ENCODE measurements at regions of chr13 and their contacts with region 1.

Region 1: GRCh38 chr13:20495082-20496023 is 30.3 kb downstream of the CRYL1 start:
- DNase-seq: peak; percentile 42
- H3K4me3 Mint-ChIP-seq: no peak overlapping the region
- H3K27ac Mint-ChIP-seq: no peak overlapping the region
- H3K4me1 Mint-ChIP-seq: no peaks in the 10 kb centered on the region
- H3K27me3 Mint-ChIP-seq: peaks cover 3% of the 10 kb centered on the region

Region 2: DNA sequence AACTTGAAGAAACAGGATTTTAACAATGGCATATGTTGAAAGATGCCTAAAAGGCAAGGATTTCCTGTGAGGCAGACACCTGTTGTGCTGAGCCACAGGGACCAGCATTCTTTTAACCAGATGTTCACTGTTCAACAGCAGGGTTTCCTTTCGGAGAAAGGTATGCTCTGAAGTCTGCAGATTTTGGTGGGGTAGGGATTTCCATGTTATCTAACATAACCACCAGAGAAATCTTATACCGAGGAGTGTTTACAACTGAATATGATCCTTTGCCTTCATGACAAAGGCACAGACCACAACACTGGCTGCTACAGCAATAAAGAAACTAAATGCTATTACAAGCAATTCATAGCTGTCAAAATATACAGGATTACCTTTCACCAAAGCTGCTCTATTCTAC is 813.8 kb before region 1 on chr13:
- intact Hi-C with region 1: no loop called
- DNase-seq: no peak
- H3K4me3 Mint-ChIP-seq: no peak overlapping the region
- H3K27ac Mint-ChIP-seq: no peak overlapping the region
- H3K4me1 Mint-ChIP-seq: peaks cover 24% of the 10 kb centered on the region
- H3K27me3 Mint-ChIP-seq: no peaks in the 10 kb centered on the region

Region 3: DNA sequence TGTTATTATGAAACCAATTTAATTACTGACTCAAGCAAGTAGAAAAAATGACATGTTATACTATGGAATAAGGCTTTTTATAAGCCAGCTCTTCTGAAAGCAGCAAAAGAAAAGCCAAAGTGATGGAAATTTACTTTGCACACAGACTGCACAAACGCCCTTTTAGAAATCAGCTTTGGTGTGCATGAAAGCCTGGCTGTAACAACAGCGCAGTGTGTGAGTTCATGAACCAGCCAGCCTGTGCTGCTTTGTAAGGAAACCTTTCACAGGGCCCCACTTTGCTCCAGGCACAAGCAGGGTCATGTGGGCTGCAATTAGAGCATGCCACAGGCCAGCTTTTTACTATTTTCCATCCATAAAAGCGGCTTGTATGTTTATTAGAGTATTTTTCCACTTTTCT is 58.0 kb after region 1 on chr13:
- intact Hi-C with region 1: loop called (anchors 5 kb)
- DNase-seq: no peak
- H3K4me3 Mint-ChIP-seq: no peak overlapping the region
- H3K27ac Mint-ChIP-seq: no peak overlapping the region
- H3K4me1 Mint-ChIP-seq: no peaks in the 10 kb centered on the region
- H3K27me3 Mint-ChIP-seq: no peaks in the 10 kb centered on the region

Region 4: GRCh38 chr13:20703780-20704445 is 208.6 kb after region 1 on chr13:
- intact Hi-C with region 1: loop called (anchors 2 kb)
- DNase-seq: peak; percentile 65
- H3K4me3 Mint-ChIP-seq: no peak overlapping the region
- H3K27ac Mint-ChIP-seq: no peak overlapping the region
- H3K4me1 Mint-ChIP-seq: peaks cover 5% of the 10 kb centered on the region
- H3K27me3 Mint-ChIP-seq: peaks cover 40% of the 10 kb centered on the region

Region 5: GRCh38 chr13:20828539-20829364 is 333.4 kb after region 1 on chr13:
- intact Hi-C with region 1: loop called (anchors 1 kb)
- DNase-seq: peak; percentile 28
- H3K4me3 Mint-ChIP-seq: no peak overlapping the region
- H3K27ac Mint-ChIP-seq: no peak overlapping the region
- H3K4me1 Mint-ChIP-seq: peaks cover 8% of the 10 kb centered on the region
- H3K27me3 Mint-ChIP-seq: no peaks in the 10 kb centered on the region

Region 6: DNA sequence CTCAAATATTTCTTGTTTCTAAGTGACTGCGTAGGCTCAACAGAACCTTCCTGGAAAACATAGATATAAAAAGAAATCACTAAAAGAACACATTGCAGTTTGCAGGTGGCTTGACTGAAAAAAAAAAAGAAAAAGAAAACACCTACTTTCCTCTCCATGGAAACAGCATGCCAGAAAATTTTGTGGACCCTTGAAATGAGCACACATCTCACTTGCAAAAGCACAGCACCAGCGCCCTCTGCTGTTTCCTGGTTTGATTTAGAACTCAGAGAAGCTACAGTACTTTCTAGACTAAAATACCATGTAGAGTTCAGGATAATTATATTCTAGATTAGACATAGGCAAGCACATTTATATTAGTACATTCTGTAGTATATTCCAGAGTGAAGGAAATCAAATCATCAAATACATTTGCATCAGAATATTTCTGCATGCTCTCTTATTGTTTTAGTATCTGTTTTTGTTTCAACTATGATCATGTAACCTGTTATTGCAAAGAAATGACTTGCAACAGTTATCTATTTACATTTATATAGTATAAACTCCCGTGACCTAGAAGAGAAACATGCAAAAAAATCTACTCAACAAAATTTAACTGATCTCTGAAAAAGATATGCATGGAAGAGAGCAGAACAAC is 429.5 kb after region 1 on chr13:
- intact Hi-C with region 1: loop called (anchors 1 kb)
- DNase-seq: peak; percentile 48
- H3K4me3 Mint-ChIP-seq: no peak overlapping the region
- H3K27ac Mint-ChIP-seq: no peak overlapping the region
- H3K4me1 Mint-ChIP-seq: no peaks in the 10 kb centered on the region
- H3K27me3 Mint-ChIP-seq: peaks cover 2% of the 10 kb centered on the region

Region 7: GRCh38 chr13:21476893-21477472 is 981.6 kb after region 1 on chr13:
- intact Hi-C with region 1: loop called (anchors 5 kb)
- DNase-seq: peak; percentile 73
- H3K4me3 Mint-ChIP-seq: peak overlapping the region; percentile 67
- H3K27ac Mint-ChIP-seq: no peak overlapping the region
- H3K4me1 Mint-ChIP-seq: peaks cover 16% of the 10 kb centered on the region
- H3K27me3 Mint-ChIP-seq: peaks cover 8% of the 10 kb centered on the region